Activated CD4-positive, alpha-beta T cell treated with anti-CD3 and anti-CD28 coated beads, Interleukin-2, amount 10 ng/mL, durations not matched to agents 7 days and 5 days (primary cell): ENCODE measurements at regions of chr3 and their contacts with region 1.

Region 1: GRCh38 chr3:122415720-122416654 is at the start of gene WDR5B:
- DNase-seq: peak; percentile 99
- H3K4me3 Mint-ChIP-seq: peak within 1 kb of the TSS; percentile 87
- H3K27ac Mint-ChIP-seq: peak within 1 kb of the TSS; percentile 98
- H3K4me1 Mint-ChIP-seq: peaks cover 42% of the 10 kb centered on the region
- H3K27me3 Mint-ChIP-seq: no peaks in the 10 kb centered on the region
- total RNA-seq, gene WDR5B: 5.1 to 5.8 TPM

Region 2: GRCh38 chr3:122322095-122323075 is 93.6 kb before region 1 on chr3:
- CTCF ChIA-PET with region 1: no interaction called
- POLR2A ChIA-PET with region 1: no interaction called
- DNase-seq: peak; percentile 65
- H3K4me3 Mint-ChIP-seq: no peak overlapping the region
- H3K27ac Mint-ChIP-seq: no peak overlapping the region
- H3K4me1 Mint-ChIP-seq: peaks cover 23% of the 10 kb centered on the region
- H3K27me3 Mint-ChIP-seq: peaks cover 5% of the 10 kb centered on the region

Region 3: GRCh38 chr3:122383771-122384697 is 32.0 kb before region 1 on chr3 and contains the start of gene FAM162A:
- CTCF ChIA-PET with region 1: interaction called, 14 read pairs
- POLR2A ChIA-PET with region 1: interaction called, 4 read pairs
- DNase-seq: peak; percentile 95
- H3K4me3 Mint-ChIP-seq: peak within 1 kb of the TSS; percentile 93
- H3K27ac Mint-ChIP-seq: peak within 1 kb of the TSS; percentile 93
- H3K4me1 Mint-ChIP-seq: peaks cover 69% of the 10 kb centered on the region
- H3K27me3 Mint-ChIP-seq: no peaks in the 10 kb centered on the region
- total RNA-seq, gene FAM162A: 48.3 to 48.4 TPM

Region 4: GRCh38 chr3:122392868-122393844 is 22.8 kb before region 1 on chr3:
- CTCF ChIA-PET with region 1: interaction called, 12 read pairs
- POLR2A ChIA-PET with region 1: no interaction called
- DNase-seq: peak; percentile 46
- H3K4me3 Mint-ChIP-seq: no peak overlapping the region
- H3K27ac Mint-ChIP-seq: no peak overlapping the region
- H3K4me1 Mint-ChIP-seq: peaks cover 33% of the 10 kb centered on the region
- H3K27me3 Mint-ChIP-seq: no peaks in the 10 kb centered on the region

Region 5: GRCh38 chr3:122456074-122456473 is 40.1 kb after region 1 on chr3:
- CTCF ChIA-PET with region 1: no interaction called
- POLR2A ChIA-PET with region 1: no interaction called
- DNase-seq: no peak
- H3K4me3 Mint-ChIP-seq: no peak overlapping the region
- H3K27ac Mint-ChIP-seq: no peak overlapping the region
- H3K4me1 Mint-ChIP-seq: no peaks in the 10 kb centered on the region
- H3K27me3 Mint-ChIP-seq: no peaks in the 10 kb centered on the region

Region 6: DNA sequence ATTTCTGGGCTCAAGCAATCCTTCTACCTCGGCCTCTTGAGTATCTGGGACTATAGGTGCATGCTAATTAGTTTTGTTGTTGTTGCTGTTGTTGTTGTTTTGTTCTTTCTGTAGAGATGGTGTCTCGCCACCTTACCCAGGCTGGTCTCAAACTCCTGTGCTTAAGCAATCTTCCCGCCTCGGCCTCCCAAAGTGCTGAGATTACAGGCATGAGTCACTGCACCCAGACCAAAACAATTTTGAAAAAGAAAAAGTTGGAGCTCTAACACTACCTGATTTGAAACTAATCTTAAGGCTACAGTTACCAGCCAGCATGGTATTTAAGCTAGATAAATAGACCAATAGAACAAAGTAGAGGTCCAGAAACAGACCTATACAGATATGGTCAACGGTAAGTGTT is 69.0 kb after region 1 on chr3:
- CTCF ChIA-PET with region 1: no interaction called
- POLR2A ChIA-PET with region 1: no interaction called
- DNase-seq: no peak
- H3K4me3 Mint-ChIP-seq: no peak overlapping the region
- H3K27ac Mint-ChIP-seq: no peak overlapping the region
- H3K4me1 Mint-ChIP-seq: peaks cover 28% of the 10 kb centered on the region
- H3K27me3 Mint-ChIP-seq: no peaks in the 10 kb centered on the region

Region 7: GRCh38 chr3:122993124-122993978 is 577.4 kb after region 1 on chr3:
- CTCF ChIA-PET with region 1: no interaction called
- POLR2A ChIA-PET with region 1: no interaction called
- DNase-seq: no peak
- H3K4me3 Mint-ChIP-seq: no peak overlapping the region
- H3K27ac Mint-ChIP-seq: no peak overlapping the region
- H3K4me1 Mint-ChIP-seq: no peaks in the 10 kb centered on the region
- H3K27me3 Mint-ChIP-seq: peaks cover 43% of the 10 kb centered on the region